ENCODE measurements at regions of chr4 and their contacts with region 1.

Region 1: DNA sequence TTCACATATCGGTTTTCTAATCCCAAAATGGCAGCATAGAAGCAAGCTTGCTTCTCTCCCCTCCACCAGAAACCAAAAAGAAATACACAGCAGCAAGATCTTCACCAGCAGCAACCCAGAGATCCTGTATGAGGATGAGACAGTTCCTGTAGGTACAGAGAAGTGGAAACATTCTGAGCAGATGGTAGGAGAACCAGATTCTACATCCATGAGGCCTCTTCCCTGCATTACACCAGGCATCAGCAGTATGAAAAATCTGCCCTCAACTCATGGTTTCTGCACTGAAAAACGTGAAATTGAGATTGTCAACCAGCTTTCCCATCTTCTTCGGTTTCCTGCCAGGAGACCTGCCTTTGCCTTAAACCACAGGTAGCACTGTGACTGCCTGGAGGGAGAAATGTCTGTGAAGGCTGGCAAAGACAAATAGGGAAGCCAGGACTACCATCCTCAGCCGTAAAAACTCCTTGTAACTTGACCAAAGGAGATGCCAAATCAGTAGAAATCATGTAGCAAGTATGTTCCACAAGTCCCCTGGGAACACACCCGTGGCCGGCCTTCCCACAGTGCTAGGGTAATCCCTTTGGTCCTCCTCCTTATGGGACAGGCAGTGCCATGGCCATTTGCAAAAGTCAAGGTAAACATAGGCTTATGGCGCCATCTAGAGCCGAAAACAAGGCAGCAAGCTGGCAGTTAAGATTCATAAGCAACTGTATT is 24.0 kb upstream of the MTHFD2L start:
- DNase-seq: peak; percentile 96
- ATAC-seq: peak; percentile 99
- H3K4me3 ChIP-seq: no peak overlapping the region
- H3K27ac ChIP-seq: peak overlapping the region; percentile 59
- H3K4me1 ChIP-seq: peaks cover 7% of the 10 kb centered on the region
- H3K27me3 ChIP-seq: no peaks in the 10 kb centered on the region
- CTCF ChIP-seq: peak; percentile 98

Region 2: GRCh38 chr4:73573794-73574406 is 560.0 kb before region 1 on chr4:
- CTCF ChIA-PET with region 1: no interaction called
- POLR2A ChIA-PET with region 1: no interaction called
- intact Hi-C with region 1: loop called (anchors 5 kb)
- DNase-seq: peak; percentile 91
- ATAC-seq: peak; percentile 96
- H3K4me3 ChIP-seq: no peak overlapping the region
- H3K27ac ChIP-seq: no peak overlapping the region
- H3K4me1 ChIP-seq: no peaks in the 10 kb centered on the region; the same call in 1 of the 2 replicates
- H3K27me3 ChIP-seq: no peaks in the 10 kb centered on the region
- CTCF ChIP-seq: peak; percentile 98

Region 3: DNA sequence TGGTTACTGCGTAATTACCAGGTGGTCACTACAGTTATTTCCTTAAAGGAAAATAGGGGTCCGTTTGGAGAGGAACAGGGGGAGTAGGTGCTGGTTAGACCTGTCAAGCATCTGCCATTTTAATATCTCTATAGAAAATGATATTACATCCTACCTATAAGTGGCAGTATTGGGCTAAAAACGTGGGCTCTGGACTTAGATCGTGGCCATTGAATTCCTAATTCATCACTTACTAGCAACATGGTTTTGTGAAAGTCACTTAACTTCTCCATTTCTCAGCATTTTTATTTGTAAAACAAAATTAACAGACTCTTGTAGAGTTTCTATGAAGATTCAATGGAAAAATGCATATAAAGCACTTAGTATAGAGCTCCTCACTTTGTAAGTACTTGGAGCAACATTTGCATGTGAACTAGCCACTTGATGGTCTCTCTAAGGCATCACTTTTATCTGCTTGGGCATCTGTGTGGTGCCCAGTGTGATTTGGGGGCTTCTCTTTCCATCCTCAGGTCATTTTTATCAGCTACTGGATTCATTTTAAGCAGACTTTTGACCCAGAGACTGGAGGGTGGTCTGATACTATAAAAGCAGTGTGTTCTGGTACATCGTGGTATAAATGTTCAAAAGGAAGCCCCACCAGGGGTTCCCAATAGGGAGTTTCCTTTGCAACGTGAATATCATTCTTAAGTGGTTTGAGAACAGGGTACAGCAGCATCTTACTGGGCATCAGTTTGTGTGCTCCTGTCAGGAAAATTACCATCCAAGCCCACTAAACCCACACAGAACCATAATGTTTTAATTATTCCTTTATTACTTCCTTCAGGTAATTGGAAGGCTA is 471.0 kb before region 1 on chr4:
- CTCF ChIA-PET with region 1: interaction called, 5 read pairs
- POLR2A ChIA-PET with region 1: interaction called, 5 read pairs
- intact Hi-C with region 1: loop called (anchors 1 kb)
- DNase-seq: peak; percentile 91
- ATAC-seq: peak; percentile 82
- H3K4me3 ChIP-seq: no peak overlapping the region
- H3K27ac ChIP-seq: peak overlapping the region; percentile 75
- H3K4me1 ChIP-seq: peaks cover 40% of the 10 kb centered on the region
- H3K27me3 ChIP-seq: no peaks in the 10 kb centered on the region
- CTCF ChIP-seq: peak; percentile 91

Region 4: DNA sequence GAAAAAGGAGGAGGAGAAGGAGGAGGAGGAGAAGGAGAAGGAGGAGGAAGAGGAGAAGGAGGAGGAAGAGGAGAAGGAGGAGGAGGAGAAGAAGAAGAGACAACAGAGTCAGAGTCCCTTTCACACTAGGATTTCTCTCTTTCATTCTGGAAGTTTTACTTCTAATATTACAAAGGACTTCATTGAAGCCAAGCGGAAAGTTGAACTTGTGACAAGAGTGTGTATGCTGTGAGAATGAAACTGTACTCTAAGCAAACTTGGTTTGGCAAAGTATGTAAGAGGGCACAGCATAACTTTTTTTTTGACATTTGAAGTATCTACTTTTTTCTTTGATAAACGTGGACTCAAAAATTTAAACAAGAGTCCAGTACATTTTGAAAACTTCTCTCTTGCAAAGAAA is 345.5 kb before region 1 on chr4:
- CTCF ChIA-PET with region 1: no interaction called
- POLR2A ChIA-PET with region 1: interaction called, 12 read pairs
- intact Hi-C with region 1: no loop called
- DNase-seq: no peak
- ATAC-seq: no peak
- H3K4me3 ChIP-seq: no peak overlapping the region
- H3K27ac ChIP-seq: no peak overlapping the region
- H3K4me1 ChIP-seq: peaks cover 6% of the 10 kb centered on the region; the same call in 1 of the 2 replicates
- H3K27me3 ChIP-seq: no peaks in the 10 kb centered on the region
- CTCF ChIP-seq: no peak

Region 5: GRCh38 chr4:73922766-73923630 is 210.9 kb before region 1 on chr4:
- CTCF ChIA-PET with region 1: interaction called, 3 read pairs
- POLR2A ChIA-PET with region 1: no interaction called
- intact Hi-C with region 1: loop called (anchors 1 kb)
- DNase-seq: peak; percentile 83
- ATAC-seq: peak; percentile 70
- H3K4me3 ChIP-seq: no peak overlapping the region
- H3K27ac ChIP-seq: peak overlapping the region; percentile 59
- H3K4me1 ChIP-seq: peaks cover 26% of the 10 kb centered on the region
- H3K27me3 ChIP-seq: no peaks in the 10 kb centered on the region
- CTCF ChIP-seq: peak; percentile 91

Region 6: GRCh38 chr4:74056858-74057562 is 76.9 kb before region 1 on chr4:
- CTCF ChIA-PET with region 1: no interaction called
- POLR2A ChIA-PET with region 1: no interaction called
- intact Hi-C with region 1: loop called (anchors 5 kb)
- DNase-seq: peak; percentile 87
- ATAC-seq: peak; percentile 84
- H3K4me3 ChIP-seq: no peak overlapping the region
- H3K27ac ChIP-seq: peak overlapping the region; percentile 92
- H3K4me1 ChIP-seq: peaks cover 34% of the 10 kb centered on the region
- H3K27me3 ChIP-seq: no peaks in the 10 kb centered on the region
- CTCF ChIP-seq: no peak

Region 7: DNA sequence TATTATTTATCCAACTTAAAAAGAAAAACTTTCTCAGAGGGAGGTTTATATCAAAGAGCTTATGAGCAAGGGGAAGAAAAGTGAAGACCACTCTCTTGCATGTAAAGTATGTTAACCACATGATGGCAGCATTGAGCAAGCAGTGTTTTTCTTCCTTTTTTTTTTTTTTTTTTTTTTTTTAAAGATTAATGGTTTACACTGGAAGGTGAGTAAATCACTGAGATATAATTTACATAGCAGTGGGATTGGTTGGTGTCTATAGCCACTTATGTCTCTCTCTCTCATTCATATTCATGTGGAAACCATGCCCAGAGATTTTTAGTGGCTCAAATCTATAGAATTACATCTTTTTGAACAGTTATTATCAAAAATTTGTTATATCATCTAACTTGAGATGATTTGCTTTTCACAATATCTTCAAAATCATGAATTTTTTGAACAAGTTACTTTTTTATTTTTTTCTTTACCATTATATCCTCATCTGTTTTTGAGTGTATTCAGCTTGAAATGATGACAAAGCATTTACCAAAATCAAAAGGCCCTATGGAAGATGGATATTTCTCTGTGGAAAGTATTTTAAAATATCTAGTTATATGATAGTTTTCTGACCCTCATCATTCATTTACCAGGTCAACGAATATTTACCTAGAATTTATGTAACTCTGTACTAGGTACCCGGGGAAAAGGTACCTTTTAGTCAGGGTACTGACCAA is 55.5 kb after region 1 on chr4:
- CTCF ChIA-PET with region 1: interaction called, 11 read pairs
- POLR2A ChIA-PET with region 1: no interaction called
- intact Hi-C with region 1: no loop called
- DNase-seq: peak; percentile 79
- ATAC-seq: peak; percentile 65
- H3K4me3 ChIP-seq: no peak overlapping the region
- H3K27ac ChIP-seq: peak overlapping the region; percentile 17
- H3K4me1 ChIP-seq: peaks cover 19% of the 10 kb centered on the region
- H3K27me3 ChIP-seq: no peaks in the 10 kb centered on the region
- CTCF ChIP-seq: peak; percentile 91

Region 8: DNA sequence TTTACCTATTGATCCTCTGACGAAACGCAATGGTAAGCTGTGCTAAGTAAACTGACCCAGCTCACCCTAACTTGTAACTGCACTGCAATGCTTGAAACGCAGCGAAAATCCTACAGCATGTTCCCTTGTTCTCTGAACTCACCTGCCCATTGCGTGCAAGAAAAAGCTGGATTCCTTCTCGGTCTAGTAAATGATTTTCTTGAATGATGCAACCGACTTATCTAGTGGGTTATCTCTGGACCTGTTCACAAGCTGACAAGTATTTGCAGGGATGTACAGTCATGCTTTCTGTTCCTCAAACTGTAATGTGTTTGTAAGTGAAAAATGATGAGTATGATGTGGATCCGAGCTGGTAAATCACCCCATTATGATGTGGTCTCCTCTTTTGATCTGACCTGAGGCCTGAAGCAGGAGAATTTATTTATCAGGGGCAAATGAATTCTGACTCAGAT is 520.3 kb after region 1 on chr4:
- CTCF ChIA-PET with region 1: no interaction called
- POLR2A ChIA-PET with region 1: no interaction called
- intact Hi-C with region 1: no loop called
- DNase-seq: peak; percentile 92
- ATAC-seq: peak; percentile 83
- H3K4me3 ChIP-seq: peak overlapping the region; percentile 29
- H3K27ac ChIP-seq: peak overlapping the region; percentile 99
- H3K4me1 ChIP-seq: peaks cover 55% of the 10 kb centered on the region
- H3K27me3 ChIP-seq: no peaks in the 10 kb centered on the region
- CTCF ChIP-seq: no peak